Heart left ventricle (tissue), 16 donors: ENCODE measurements at regions of chr3 and their contacts with region 1.

Region 1: GRCh38 chr3:11651900-11652299 is 8.2 kb upstream of the VGLL4 start:
- DNase-seq: no peak
- ATAC-seq: no peak
- H3K4me3 ChIP-seq: no peak overlapping the region
- H3K27ac ChIP-seq: no peak overlapping the region
- H3K4me1 ChIP-seq: peaks cover 0 to 4% (median 0%) of the 10 kb centered on the region in 12 donors
- H3K27me3 ChIP-seq: no peaks in the 10 kb centered on the region
- CTCF ChIP-seq: peak; percentile 45 to 76 (median 56)
- POLR2A ChIP-seq: no peak

Region 2: GRCh38 chr3:11379233-11379823 is 272.6 kb before region 1 on chr3:
- intact Hi-C with region 1: loop called in 9 of 10 experiments (anchors 1 to 2 kb)
- DNase-seq: no peak
- ATAC-seq: peak; percentile 26 to 72 (median 62)
- H3K4me3 ChIP-seq: no peak overlapping the region
- H3K27ac ChIP-seq: peak overlapping the region in 1 of 12 donors; percentile 15
- H3K4me1 ChIP-seq: peaks cover 0 to 18% (median 2%) of the 10 kb centered on the region in 12 donors
- H3K27me3 ChIP-seq: no peaks in the 10 kb centered on the region
- CTCF ChIP-seq: peak; percentile 36 to 82 (median 67)
- POLR2A ChIP-seq: no peak

Region 3: DNA sequence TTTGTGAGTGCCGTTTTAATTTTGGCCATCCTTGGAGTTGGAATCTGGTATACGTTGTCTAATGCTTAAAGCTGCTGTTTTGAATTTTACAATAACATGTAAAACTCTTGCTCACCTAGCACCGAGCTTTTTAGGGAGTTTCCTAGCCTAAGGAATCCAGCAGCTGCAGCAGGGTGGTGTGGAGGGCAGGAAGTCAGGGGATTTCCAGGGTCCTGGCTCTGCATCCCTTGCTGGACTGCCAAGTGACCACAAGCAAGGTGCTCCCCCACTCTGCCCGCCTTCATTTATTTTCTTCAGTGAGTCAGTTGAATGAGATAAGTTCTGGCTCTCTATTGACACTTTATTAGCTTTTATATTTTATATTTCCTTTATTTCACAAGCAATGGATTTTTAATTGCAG is 266.0 kb before region 1 on chr3:
- intact Hi-C with region 1: loop called in 2 of 10 experiments (anchors 2 to 5 kb)
- DNase-seq: no peak
- ATAC-seq: peak in 1 of 4 donors; percentile 74
- H3K4me3 ChIP-seq: no peak overlapping the region
- H3K27ac ChIP-seq: peak overlapping the region in 1 of 12 donors; percentile 28
- H3K4me1 ChIP-seq: peaks cover 0 to 31% (median 21%) of the 10 kb centered on the region in 12 donors
- H3K27me3 ChIP-seq: no peaks in the 10 kb centered on the region
- CTCF ChIP-seq: no peak
- POLR2A ChIP-seq: no peak

Region 4: DNA sequence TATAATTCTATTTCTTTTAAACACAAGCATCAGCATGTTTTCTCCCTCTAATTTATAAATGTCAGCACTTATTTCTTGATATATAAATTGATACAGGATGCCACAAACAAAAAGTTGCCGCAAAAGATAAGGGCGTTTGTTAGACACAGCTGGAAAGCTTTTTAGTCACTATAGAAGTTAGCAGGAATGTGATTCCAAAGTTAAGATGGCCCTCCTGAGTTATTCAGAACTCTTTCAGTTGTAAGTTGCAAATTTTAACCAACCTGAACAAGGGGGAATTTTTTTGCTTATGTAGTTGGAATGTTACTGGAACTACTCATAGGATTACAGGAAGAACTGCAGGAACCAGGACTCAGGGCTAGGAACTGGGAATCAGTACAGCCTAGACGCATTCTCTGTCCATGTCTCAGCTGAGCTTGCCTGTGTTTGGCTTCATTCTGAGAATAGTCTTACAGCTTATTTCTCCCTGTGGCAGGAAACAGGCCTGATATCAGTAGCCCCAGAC is 174.4 kb before region 1 on chr3:
- intact Hi-C with region 1: loop called in 1 of 10 experiments (anchors 10 kb)
- DNase-seq: no peak
- ATAC-seq: peak; percentile 22 to 60 (median 53)
- H3K4me3 ChIP-seq: no peak overlapping the region
- H3K27ac ChIP-seq: peak overlapping the region in 8 of 12 donors; percentile 26 to 85 (median 66)
- H3K4me1 ChIP-seq: peaks cover 4 to 45% (median 37%) of the 10 kb centered on the region in 12 donors
- H3K27me3 ChIP-seq: no peaks in the 10 kb centered on the region
- CTCF ChIP-seq: no peak
- POLR2A ChIP-seq: no peak

Region 5: DNA sequence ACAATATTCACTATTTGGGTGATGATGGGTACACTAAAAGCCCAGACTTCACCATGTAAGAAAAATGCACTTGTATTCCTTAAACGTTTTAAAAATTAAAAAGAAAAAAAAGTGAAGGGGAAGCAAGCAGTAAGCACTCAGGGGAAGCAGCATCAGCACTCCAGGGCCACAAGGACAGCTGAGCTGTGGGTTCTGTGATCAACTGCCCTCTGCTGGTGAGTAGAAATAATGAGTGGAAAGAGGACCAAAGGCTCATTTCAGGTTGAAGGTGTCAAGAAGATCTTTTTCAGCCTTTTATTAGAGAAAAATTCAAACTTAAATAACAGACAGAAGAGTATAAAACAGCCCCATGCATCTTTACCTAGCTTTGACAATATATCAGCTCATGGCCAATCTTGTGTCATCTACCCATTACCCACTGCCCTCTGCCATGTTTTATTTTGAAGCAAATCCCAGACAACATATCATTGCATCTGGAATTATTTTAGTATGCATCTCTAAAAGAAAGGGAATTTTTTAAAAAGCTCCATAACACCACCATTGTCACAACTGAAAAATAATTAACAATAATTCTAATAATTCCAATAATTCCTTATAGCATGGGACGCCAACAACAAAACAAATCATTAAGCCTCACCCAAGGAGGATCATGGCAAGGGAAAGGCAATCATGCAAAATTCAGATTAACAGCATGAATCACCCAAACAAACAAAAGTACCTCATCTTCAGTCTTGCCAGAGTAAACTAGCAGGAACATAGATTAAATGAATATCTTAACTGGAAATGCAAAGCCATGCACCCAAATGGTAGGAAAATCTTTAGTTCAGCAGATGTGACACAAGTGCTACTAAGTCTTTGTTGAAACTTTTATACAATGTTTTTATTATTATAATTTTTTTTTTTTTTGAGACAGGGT is 152.3 kb after region 1 on chr3:
- intact Hi-C with region 1: loop called (anchors 2 to 10 kb)
- DNase-seq: peak in 3 of 5 donors; percentile 24 to 53 (median 25)
- ATAC-seq: peak in 3 of 4 donors; percentile 69 to 74 (median 72)
- H3K4me3 ChIP-seq: no peak overlapping the region
- H3K27ac ChIP-seq: no peak overlapping the region
- H3K4me1 ChIP-seq: no peaks in the 10 kb centered on the region
- H3K27me3 ChIP-seq: no peaks in the 10 kb centered on the region
- CTCF ChIP-seq: peak; percentile 62 to 81 (median 71)
- POLR2A ChIP-seq: no peak

Region 6: GRCh38 chr3:12436514-12437220 is 784.8 kb after region 1 on chr3:
- intact Hi-C with region 1: no loop called
- DNase-seq: no peak
- ATAC-seq: peak in 1 of 4 donors; percentile 17
- H3K4me3 ChIP-seq: no peak overlapping the region
- H3K27ac ChIP-seq: peak overlapping the region in 3 of 12 donors; percentile 16 to 43 (median 27)
- H3K4me1 ChIP-seq: peaks cover 0 to 33% (median 16%) of the 10 kb centered on the region in 12 donors
- H3K27me3 ChIP-seq: no peaks in the 10 kb centered on the region
- CTCF ChIP-seq: no peak
- POLR2A ChIP-seq: no peak